Mammary epithelial cell (primary cell): ENCODE measurements at regions of chr19 and their contacts with region 1.

Region 1: DNA sequence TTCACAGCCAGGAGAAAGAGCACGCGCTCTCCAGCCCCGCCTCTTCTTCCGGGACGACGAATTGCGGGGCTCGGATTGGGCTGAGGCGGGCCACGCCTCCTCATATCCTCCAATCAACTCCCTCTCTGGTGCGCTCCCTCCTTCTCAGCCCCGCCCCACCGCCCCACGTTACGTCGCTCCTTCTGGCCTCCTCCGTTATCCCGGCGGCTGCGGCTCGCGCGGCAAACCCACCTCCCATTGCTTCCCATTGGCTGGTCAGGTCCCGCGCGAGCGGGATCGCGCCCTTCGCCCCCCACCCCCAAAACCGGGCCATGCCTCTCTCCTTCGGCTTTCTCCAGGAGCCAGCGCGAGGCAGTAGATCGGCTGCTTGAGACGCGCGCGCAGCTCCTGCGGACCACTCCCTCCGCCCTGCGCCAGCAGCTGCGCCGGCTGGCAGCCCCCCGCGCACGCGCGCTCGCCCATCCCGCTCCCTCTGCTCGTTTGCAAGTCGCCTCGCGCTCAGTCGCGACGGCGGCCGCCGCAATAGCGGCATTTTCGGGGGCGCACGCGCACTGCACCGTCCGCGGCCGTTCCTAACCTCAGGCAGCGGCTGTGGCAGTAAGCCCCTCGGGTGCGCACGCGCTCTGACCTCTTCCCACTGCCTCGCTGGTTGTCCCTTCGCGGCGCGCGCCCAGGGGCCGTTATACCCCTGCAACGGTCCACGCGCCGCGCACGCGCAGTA is 512 bp upstream of the ARHGAP35 start:
- DNase-seq: peak; percentile 99
- H3K4me3 ChIP-seq: peak overlapping the region; percentile 76 to 90 (median 87)
- H3K27ac ChIP-seq: peak overlapping the region; percentile 73
- H3K4me1 ChIP-seq: peaks cover 32% of the 10 kb centered on the region
- H3K27me3 ChIP-seq: no peaks in the 10 kb centered on the region
- CTCF ChIP-seq: no peak

Region 2: GRCh38 chr19:46890423-46891170 is 30.3 kb after region 1 on chr19:
- CTCF ChIA-PET with region 1: interaction called, 8 read pairs
- dilution Hi-C with region 1: no loop called
- in situ Hi-C with region 1: no loop called
- intact Hi-C with region 1: loop called (anchors 1 kb)
- DNase-seq: peak; percentile 60
- H3K4me3 ChIP-seq: no peak overlapping the region
- H3K27ac ChIP-seq: no peak overlapping the region
- H3K4me1 ChIP-seq: peaks cover 15% of the 10 kb centered on the region
- H3K27me3 ChIP-seq: no peaks in the 10 kb centered on the region
- CTCF ChIP-seq: no peak

Region 3: DNA sequence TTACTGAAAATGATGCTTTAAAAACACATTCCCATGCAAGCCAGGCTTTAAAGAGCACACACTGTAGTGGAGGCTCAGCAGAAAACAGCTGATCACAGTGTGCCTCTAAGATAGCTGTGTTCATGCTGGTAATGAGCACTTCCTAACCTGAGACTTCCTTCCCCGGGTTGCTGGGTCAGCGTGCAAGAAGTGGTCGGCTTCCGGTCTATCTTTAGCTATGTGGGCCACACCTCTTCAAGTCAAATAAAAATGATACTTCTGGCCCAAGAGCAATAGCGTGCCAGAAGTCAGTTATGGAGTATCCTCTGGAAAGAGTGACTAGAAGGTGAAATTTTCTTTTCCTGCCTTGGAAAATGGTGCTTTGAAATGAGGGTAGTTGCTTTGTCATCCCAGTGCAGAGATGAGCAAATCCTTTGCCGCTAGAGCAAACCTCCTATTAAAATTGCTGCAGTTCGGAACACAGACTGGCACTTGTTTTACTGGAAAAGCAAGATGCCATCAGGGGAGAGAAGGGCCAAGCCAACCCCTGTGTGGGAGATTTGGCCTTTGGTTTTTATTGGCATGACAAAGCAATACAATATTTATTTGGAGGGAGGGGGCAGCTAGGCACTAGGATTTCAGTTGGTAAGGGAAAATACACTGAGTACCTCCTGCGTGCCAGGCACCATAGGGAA is 64.7 kb after region 1 on chr19:
- CTCF ChIA-PET with region 1: no interaction called
- dilution Hi-C with region 1: no loop called
- in situ Hi-C with region 1: loop called in 1 of 2 experiments (anchors 10 kb)
- intact Hi-C with region 1: loop called (anchors 1 kb)
- DNase-seq: peak; percentile 63
- H3K4me3 ChIP-seq: peak overlapping the region in 1 of 3 experiments; percentile 13
- H3K27ac ChIP-seq: peak overlapping the region; percentile 97
- H3K4me1 ChIP-seq: peaks cover 52% of the 10 kb centered on the region
- H3K27me3 ChIP-seq: no peaks in the 10 kb centered on the region
- CTCF ChIP-seq: no peak

Region 4: DNA sequence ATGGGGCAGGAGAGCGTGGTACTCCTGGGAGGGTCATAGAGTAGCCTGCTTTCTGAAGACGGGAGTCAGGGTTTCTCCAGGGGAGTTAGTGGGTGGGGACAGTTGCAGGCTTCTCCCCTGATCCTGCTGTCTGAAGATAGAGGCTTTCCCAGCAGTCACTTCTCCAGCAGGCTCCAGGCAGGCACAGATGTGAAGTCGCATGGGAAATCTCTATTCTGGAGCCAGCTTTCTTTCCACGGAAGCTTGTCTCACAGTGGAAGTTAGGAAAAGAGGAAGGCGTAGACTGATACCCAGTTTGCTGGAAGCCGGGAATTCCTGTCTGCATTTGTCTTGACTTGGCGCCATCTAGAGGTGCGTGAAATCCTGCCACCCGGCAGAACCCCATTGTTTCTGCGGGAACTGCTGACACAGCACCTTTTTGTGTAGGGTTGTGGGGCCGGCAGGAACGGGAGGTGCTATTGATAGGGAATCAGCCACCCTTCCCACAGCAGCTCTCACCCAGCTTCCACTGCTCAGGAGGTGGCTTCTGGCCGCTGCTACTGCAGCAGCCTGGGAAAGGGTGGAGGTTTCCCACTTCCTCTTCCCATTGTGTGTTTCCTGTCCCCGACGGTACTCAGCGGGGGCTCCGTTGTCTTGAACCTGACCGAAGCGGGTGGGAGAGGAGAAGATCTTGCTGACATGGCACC is 130.8 kb after region 1 on chr19:
- CTCF ChIA-PET with region 1: interaction called, 6 read pairs
- dilution Hi-C with region 1: no loop called
- in situ Hi-C with region 1: loop called in 1 of 2 experiments (anchors 5 kb)
- intact Hi-C with region 1: loop called (anchors 1 kb)
- DNase-seq: peak; percentile 60
- H3K4me3 ChIP-seq: no peak overlapping the region
- H3K27ac ChIP-seq: no peak overlapping the region
- H3K4me1 ChIP-seq: no peaks in the 10 kb centered on the region
- H3K27me3 ChIP-seq: no peaks in the 10 kb centered on the region
- CTCF ChIP-seq: peak; percentile 77 to 89

Region 5: GRCh38 chr19:47075179-47075810 is 215.0 kb after region 1 on chr19:
- CTCF ChIA-PET with region 1: no interaction called
- dilution Hi-C with region 1: no loop called
- in situ Hi-C with region 1: no loop called
- intact Hi-C with region 1: loop called (anchors 1 kb)
- DNase-seq: no peak
- H3K4me3 ChIP-seq: no peak overlapping the region
- H3K27ac ChIP-seq: no peak overlapping the region
- H3K4me1 ChIP-seq: peaks cover 2% of the 10 kb centered on the region
- H3K27me3 ChIP-seq: no peaks in the 10 kb centered on the region
- CTCF ChIP-seq: no peak

Region 6: GRCh38 chr19:47124937-47125668 is 264.8 kb after region 1 on chr19:
- CTCF ChIA-PET with region 1: interaction called, 19 read pairs
- dilution Hi-C with region 1: no loop called
- in situ Hi-C with region 1: loop called in 1 of 2 experiments (anchors 25 kb)
- intact Hi-C with region 1: no loop called
- DNase-seq: peak; percentile 55
- H3K4me3 ChIP-seq: no peak overlapping the region
- H3K27ac ChIP-seq: no peak overlapping the region
- H3K4me1 ChIP-seq: peaks cover 12% of the 10 kb centered on the region
- H3K27me3 ChIP-seq: no peaks in the 10 kb centered on the region
- CTCF ChIP-seq: peak; percentile 52 to 62